ENCODE measurements at regions of chr14 and their contacts with region 1.

Region 1: GRCh38 chr14:51548187-51548586 is 103.5 kb upstream of the FRMD6 start:
- H3K4me3 Mint-ChIP-seq: no peak overlapping the region
- H3K27ac Mint-ChIP-seq: no peak overlapping the region
- H3K4me1 Mint-ChIP-seq: no peaks in the 10 kb centered on the region
- H3K27me3 Mint-ChIP-seq: no peaks in the 10 kb centered on the region

Region 2: DNA sequence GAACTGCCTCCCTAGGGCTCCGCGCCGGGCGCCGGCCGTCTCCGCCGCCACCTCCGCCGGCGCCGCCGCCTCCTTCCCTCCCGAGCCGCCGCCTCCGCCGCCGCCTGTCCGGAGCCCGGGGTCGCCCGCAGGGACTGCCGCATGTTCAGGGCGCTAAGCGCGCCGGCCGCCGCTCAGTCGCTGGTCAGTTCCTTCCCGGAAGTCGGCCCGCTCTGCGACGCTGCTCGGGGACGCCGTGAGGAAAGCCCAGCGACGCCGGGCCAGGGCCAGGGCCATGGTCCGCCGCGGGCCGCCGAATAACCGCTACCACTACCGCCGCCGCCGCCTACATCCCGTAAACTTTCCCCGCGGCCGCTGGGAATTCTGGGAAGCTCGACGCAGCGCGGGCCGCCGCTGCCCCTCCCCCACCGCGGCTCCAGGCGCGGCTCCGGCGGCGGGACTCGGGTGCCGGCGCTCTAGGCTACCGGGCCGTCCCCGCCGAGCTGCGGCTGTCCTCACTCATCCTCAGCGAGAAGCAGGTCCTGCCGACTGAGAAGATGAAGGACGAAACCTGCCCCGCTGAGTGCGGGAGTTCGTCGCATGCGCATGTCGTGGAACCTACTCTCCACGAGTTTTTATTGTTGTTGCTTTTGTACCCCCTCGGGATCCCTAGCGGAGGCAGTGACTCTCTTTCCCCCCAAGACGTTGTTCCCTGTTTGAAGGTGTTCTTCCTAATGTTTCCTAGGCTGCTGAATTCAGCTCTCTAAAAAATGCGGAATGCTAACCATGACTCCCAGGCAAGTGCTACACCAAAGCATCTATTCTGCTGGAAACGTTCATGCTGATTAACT is 880.0 kb before region 1 on chr14 and contains the start of gene SAV1:
- intact Hi-C with region 1: no loop called
- H3K4me3 Mint-ChIP-seq: no peak within 1 kb of the TSS
- H3K27ac Mint-ChIP-seq: no peak within 1 kb of the TSS
- H3K4me1 Mint-ChIP-seq: peaks cover 19% of the 10 kb centered on the region
- H3K27me3 Mint-ChIP-seq: no peaks in the 10 kb centered on the region

Region 3: GRCh38 chr14:51568366-51568765 is 20.2 kb after region 1 on chr14:
- intact Hi-C with region 1: loop called (anchors 2 kb)
- H3K4me3 Mint-ChIP-seq: no peak overlapping the region
- H3K27ac Mint-ChIP-seq: no peak overlapping the region
- H3K4me1 Mint-ChIP-seq: no peaks in the 10 kb centered on the region
- H3K27me3 Mint-ChIP-seq: peaks cover 5% of the 10 kb centered on the region

Region 4: DNA sequence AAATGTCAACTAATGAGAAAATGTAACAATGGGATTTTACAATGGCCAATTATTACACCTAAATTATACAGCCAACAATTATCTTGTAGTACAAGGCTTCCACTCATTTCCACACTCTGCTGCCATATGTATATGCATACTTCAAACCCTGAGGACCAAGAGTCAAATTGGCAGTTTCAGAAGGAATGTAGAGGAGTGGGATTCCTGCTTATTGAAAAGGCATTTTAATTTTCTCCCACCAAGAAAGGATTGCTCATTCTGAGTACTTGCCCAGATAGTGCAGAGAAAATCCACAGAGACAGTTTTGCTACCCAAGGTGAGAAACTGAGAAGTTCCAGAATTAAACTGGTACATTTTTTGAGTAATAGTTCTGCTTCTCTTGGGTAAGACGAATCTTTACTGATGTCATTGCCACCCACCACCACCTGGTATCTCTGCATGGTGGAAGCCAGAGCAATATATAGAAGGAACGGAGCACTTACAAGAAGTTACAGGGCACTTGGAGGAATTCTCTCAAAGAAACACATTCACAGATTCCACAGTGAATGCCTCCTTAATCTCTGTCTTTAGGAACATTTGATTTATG is 82.7 kb after region 1 on chr14:
- intact Hi-C with region 1: no loop called
- H3K4me3 Mint-ChIP-seq: no peak overlapping the region
- H3K27ac Mint-ChIP-seq: no peak overlapping the region
- H3K4me1 Mint-ChIP-seq: no peaks in the 10 kb centered on the region
- H3K27me3 Mint-ChIP-seq: peaks cover 2% of the 10 kb centered on the region

Region 5: GRCh38 chr14:52015411-52016030 is 467.3 kb after region 1 on chr14:
- intact Hi-C with region 1: no loop called
- H3K4me3 Mint-ChIP-seq: no peak overlapping the region
- H3K27ac Mint-ChIP-seq: no peak overlapping the region
- H3K4me1 Mint-ChIP-seq: peaks cover 18% of the 10 kb centered on the region
- H3K27me3 Mint-ChIP-seq: peaks cover 7% of the 10 kb centered on the region

Measured in dendritic cell treated with granulocyte-macrophage colony-stimulating factor and Interleukin-4, amounts not matched to agents 40 ng/mL and 50 ng/mL, for 4 days (primary cell).